Uterus (tissue), 4 donors: ENCODE measurements at regions of chr2 and their contacts with region 1.

Region 1: GRCh38 chr2:9310377-9310776 is 103.8 kb downstream of the ASAP2 start:
- DNase-seq: peak; percentile 65 to 70
- H3K4me3 ChIP-seq: no peak overlapping the region
- H3K27ac ChIP-seq: peak overlapping the region; percentile 78 to 89
- H3K4me1 ChIP-seq: peaks cover 5% of the 10 kb centered on the region in 2 donors
- H3K27me3 ChIP-seq: no peaks in the 10 kb centered on the region
- CTCF ChIP-seq: peak in 1 of 4 experiments; percentile 13
- POLR2A ChIP-seq: peak in 1 of 2 donors; percentile 15

Region 2: DNA sequence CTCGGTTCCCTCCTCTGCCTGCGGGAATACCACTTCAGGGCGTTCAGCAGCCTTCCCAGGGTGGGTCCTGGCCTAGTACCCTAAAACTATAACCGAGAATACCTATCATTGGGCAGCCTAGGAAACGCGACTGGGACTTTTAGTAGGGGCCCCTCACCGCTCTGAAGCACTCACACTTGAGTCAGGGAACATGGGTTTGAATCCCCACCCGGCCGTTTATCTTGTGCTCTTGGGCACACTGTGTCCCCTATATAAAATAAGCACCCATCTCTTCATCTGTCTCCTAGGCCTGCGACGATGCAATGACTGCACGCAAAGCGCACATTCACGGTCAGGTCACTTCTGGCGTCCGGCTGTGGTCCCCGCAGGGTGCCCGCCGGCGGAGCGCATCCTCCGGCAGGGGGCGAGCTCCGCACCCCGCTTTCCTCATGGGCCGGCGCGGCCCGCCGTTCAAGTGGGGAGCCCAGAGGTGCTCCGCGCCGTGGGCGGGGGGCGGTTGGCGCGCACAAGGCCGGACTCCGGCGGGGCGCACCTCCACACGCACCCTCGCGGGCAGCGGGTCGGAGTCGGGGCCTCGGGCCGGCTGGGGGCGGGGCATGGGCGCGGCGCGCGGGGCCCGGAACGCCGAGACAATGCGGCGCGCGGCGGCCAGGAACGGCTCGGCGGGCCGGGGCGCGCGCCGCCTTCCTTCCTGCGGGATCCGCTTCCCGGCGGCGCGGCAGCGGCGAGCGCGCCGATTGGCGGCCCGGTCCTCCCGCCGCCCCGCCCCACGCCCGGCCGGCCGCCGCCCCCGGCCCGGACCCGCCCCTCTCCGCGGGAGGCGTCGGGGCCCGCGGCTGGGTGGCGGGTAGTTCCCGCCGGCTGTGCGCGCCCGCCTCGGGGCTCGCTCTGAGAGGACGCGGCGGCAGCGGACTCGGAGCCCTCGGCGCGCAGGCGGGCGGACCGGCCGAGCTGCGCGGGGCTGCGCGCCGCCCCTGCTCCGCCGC is 104.1 kb before region 1 on chr2 and contains the start of gene ASAP2:
- intact Hi-C with region 1: loop called (anchors 10 kb)
- DNase-seq: peak; percentile 71 to 79
- H3K4me3 ChIP-seq: peak within 1 kb of the TSS; percentile 54 to 84
- H3K27ac ChIP-seq: peak within 1 kb of the TSS; percentile 85 to 94
- H3K4me1 ChIP-seq: peaks cover 3% of the 10 kb centered on the region in 2 donors
- H3K27me3 ChIP-seq: no peaks in the 10 kb centered on the region
- CTCF ChIP-seq: peak; percentile 85 to 94 (median 90)
- POLR2A ChIP-seq: peak; percentile 36 to 51
- total RNA-seq, gene ASAP2: 24.3 to 55.5 (median 31.3) TPM

Region 3: DNA sequence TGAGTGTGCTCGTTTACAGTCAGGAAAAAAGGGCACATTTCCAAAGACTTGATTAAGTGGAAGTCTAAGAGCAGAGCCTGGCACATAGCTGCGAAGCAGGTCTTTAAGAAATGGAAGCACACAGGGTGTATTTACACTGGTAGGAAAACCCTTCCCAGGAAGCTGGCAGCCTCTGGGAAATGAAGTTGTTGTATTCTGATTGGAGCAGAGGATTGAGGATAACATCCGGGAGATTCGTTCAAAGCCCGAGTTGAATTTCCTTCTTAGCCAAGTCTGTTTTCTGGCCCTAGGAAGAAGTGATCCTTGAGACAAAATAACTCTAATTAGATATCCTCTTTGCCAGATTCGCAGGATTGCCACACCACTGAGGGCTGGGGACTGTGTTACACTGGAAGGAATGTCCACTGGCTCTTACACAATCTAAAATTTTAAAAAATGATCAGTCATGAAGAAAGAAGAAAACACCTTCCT is 37.1 kb after region 1 on chr2:
- intact Hi-C with region 1: no loop called
- DNase-seq: peak; percentile 76 to 86
- H3K4me3 ChIP-seq: no peak overlapping the region
- H3K27ac ChIP-seq: peak overlapping the region; percentile 63 to 72
- H3K4me1 ChIP-seq: peaks cover 0 to 3% of the 10 kb centered on the region in 2 donors
- H3K27me3 ChIP-seq: no peaks in the 10 kb centered on the region
- CTCF ChIP-seq: no peak
- POLR2A ChIP-seq: no peak

Region 4: DNA sequence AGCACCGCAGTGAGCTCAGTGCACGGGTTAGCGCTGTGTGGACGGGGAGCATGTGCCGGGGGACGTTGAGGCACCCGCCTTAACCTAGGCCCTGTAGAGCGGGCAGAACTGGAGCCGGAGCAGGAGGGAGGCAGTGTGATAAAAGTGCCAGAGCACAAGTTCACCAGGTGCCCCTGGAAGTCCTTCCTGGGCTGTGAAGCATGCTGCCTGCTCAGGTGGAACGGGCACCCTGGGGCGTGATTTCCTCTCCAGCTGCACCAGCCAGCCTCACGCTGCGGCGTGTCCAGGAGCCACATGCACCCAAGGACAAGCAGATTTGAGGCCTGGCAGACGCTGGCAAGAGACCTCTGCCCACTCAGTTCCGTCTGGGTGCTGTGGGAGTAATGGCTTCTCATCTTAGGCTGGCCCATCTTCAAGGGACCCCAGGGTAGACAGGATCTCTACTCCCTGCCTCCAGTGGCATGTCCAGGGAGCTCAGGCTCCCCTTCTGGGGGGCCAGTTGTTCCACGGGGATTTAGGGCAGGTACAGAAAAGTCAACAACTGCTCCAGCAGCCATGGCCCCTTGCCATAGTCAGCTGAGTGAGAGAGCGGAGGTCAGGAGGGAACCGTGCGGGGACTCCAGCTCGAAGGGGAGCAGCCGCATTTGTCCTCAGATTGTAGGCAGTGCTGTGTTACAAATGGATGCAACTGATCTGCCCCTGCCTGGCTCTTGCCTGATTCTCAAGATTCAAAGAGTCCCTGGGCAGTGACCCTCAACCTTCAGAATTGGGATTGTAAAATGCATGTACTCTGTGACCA is 62.9 kb after region 1 on chr2:
- intact Hi-C with region 1: no loop called
- DNase-seq: no peak
- H3K4me3 ChIP-seq: no peak overlapping the region
- H3K27ac ChIP-seq: no peak overlapping the region
- H3K4me1 ChIP-seq: peaks cover 0 to 3% of the 10 kb centered on the region in 2 donors
- H3K27me3 ChIP-seq: no peaks in the 10 kb centered on the region
- CTCF ChIP-seq: no peak
- POLR2A ChIP-seq: no peak